Dorsolateral prefrontal cortex (tissue), 120 donors: ENCODE measurements at regions of chr21 and their contacts with region 1.

Region 1: GRCh38 chr21:20999659-21000058 is 1.4 kb downstream of the NCAM2 start:
- DNase-seq: peak in 5 of 10 donors; percentile 5 to 67 (median 52)
- H3K4me3 ChIP-seq: peak overlapping the region; percentile 63 to 93 (median 79)
- H3K27ac ChIP-seq: peak overlapping the region in 58 of 59 donors; percentile 1 to 96 (median 85)
- H3K27me3 ChIP-seq: no peaks in the 10 kb centered on the region
- CTCF ChIP-seq: peak; percentile 72 to 95 (median 88)

Region 2: GRCh38 chr21:20802631-20803260 is 196.9 kb before region 1 on chr21:
- intact Hi-C with region 1: loop called in 1 of 2 experiments (anchors 10 kb)
- DNase-seq: peak in 8 of 10 donors; percentile 30 to 82 (median 62)
- H3K4me3 ChIP-seq: peak overlapping the region; percentile 8 to 73 (median 52)
- H3K27ac ChIP-seq: peak overlapping the region; percentile 58 to 97 (median 91)
- H3K27me3 ChIP-seq: no peaks in the 10 kb centered on the region
- CTCF ChIP-seq: peak in 2 of 56 donors; percentile 5 to 8

Region 3: GRCh38 chr21:21101911-21102310 is 102.3 kb after region 1 on chr21:
- intact Hi-C with region 1: loop called (anchors 1 to 2 kb)
- DNase-seq: peak in 3 of 10 donors; percentile 40 to 59 (median 49)
- H3K4me3 ChIP-seq: no peak overlapping the region
- H3K27ac ChIP-seq: peak overlapping the region in 50 of 59 donors; percentile 4 to 86 (median 72)
- H3K27me3 ChIP-seq: no peaks in the 10 kb centered on the region
- CTCF ChIP-seq: peak in 55 of 56 donors; percentile 23 to 82 (median 57)

Region 4: GRCh38 chr21:21210552-21210951 is 210.9 kb after region 1 on chr21:
- intact Hi-C with region 1: loop called in 1 of 2 experiments (anchors 10 kb)
- DNase-seq: no peak
- H3K4me3 ChIP-seq: no peak overlapping the region
- H3K27ac ChIP-seq: no peak overlapping the region
- H3K27me3 ChIP-seq: no peaks in the 10 kb centered on the region
- CTCF ChIP-seq: no peak

Region 5: DNA sequence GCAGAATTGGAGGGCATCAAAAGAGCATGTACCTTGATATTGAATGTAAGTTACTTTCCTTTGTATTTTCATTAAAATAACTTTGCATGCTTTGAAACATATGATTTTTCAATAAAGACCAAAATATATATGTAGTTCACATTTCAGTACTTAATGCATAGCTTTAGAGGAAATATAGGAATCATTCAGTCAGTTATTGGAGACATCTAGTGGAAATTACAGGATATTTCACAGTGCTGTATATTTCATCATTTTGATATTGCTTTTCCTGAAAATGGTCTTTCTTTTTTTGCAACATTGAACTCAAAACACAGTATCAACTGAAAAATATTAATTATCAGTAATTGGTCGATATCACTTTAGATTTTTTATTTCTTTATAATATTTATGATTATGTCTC is 374.3 kb after region 1 on chr21:
- intact Hi-C with region 1: loop called in 1 of 2 experiments (anchors 5 kb)
- DNase-seq: no peak
- H3K4me3 ChIP-seq: peak overlapping the region in 8 of 59 donors; percentile 2 to 31 (median 12)
- H3K27ac ChIP-seq: peak overlapping the region in 41 of 59 donors; percentile 1 to 74 (median 51)
- H3K27me3 ChIP-seq: no peaks in the 10 kb centered on the region
- CTCF ChIP-seq: peak in 55 of 56 donors; percentile 29 to 79 (median 58)

Region 6: DNA sequence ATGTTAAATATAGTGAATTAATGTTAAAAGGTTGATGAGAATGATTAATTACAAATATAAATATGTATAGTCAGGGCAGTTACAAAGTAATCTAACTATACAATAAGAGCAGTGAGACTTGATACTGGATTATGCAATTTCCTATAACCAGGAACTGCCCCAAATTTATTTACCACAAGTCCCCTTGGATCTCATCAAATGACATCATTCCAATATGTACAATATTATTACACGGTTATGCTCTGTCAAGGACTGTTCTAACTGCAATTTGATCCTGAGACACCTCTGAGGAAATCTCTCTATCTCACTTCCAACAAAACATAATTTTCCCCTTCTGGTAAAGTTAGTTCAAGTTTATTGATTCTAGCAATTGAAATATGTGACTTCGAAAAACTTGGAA is 916.2 kb after region 1 on chr21:
- intact Hi-C with region 1: loop called in 1 of 2 experiments (anchors 10 kb)
- DNase-seq: no peak
- H3K4me3 ChIP-seq: no peak overlapping the region
- H3K27ac ChIP-seq: no peak overlapping the region
- H3K27me3 ChIP-seq: no peaks in the 10 kb centered on the region
- CTCF ChIP-seq: no peak

Region 7: DNA sequence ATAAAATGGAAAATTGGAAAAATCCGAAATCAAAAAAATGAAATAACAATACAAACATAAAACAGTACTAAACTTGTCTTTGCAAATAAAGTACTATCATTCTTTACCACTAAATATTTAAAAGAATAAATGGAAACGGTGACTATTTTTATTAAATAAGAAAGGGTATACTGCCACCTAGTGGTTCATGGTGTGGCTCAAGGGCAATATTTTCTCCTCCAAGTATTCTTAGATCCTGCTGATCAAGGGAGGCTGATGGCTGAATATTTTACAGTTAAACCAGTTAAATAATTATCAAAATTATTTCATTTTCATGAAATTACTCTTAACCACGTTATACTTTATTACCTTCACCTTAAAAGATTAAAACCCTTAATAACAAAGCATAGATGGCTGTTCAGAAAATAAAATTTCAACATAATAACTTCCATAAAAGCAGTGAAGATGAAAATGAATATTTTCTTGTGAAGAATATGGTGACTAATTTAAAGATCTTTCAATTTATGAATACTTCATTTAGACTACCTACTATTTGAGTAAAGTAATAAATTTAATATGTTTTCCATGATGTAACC is 1792.4 kb after region 1 on chr21:
- intact Hi-C with region 1: loop called in 1 of 2 experiments (anchors 10 kb)
- DNase-seq: peak in 1 of 10 donors; percentile 57
- H3K4me3 ChIP-seq: no peak overlapping the region
- H3K27ac ChIP-seq: no peak overlapping the region
- H3K27me3 ChIP-seq: no peaks in the 10 kb centered on the region
- CTCF ChIP-seq: peak; percentile 73 to 98 (median 89)